ENCODE measurements at regions of chr14 and their contacts with region 1.

Region 1: GRCh38 chr14:76386915-76387782 is 11.2 kb downstream of the ESRRB start:
- DNase-seq: peak; percentile 86
- H3K4me3 ChIP-seq: no peak overlapping the region
- H3K27ac ChIP-seq: no peak overlapping the region
- H3K4me1 ChIP-seq: no peaks in the 10 kb centered on the region
- H3K27me3 ChIP-seq: peaks cover 30% of the 10 kb centered on the region
- CTCF ChIP-seq: peak; percentile 97

Region 2: DNA sequence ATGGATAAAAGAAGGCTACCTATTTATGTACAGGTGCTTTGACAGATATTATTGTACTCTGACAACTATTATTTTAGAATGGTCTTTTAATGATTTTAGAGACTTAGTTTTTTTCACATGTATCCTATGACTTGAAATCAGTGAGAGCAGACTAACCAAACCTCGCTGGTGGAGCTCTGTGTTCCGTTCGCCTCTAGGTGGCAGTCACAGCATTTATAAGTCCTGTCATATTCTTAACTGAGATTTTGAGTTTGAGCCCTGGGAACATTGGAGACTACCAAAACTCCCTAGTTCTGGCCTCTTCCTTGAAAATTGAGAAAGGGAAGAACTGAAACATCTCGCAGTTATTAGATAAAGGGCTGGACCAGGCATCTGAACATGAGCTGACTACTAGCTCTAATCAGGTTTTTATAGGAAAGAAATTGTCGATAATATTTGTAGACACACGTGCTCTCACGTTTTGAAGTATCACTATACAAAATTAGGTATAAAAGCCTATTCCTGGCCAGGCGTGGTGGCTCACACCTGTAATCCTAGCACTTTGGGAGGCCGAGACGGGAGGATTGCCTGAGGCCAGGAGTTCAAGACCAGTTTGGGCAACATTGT is 677.8 kb before region 1 on chr14:
- CTCF ChIA-PET with region 1: no interaction called
- POLR2A ChIA-PET with region 1: no interaction called
- intact Hi-C with region 1: loop called (anchors 2 kb)
- DNase-seq: peak; percentile 80
- H3K4me3 ChIP-seq: no peak overlapping the region
- H3K27ac ChIP-seq: no peak overlapping the region
- H3K4me1 ChIP-seq: peaks cover 12% of the 10 kb centered on the region
- H3K27me3 ChIP-seq: no peaks in the 10 kb centered on the region
- CTCF ChIP-seq: peak; percentile 91

Region 3: DNA sequence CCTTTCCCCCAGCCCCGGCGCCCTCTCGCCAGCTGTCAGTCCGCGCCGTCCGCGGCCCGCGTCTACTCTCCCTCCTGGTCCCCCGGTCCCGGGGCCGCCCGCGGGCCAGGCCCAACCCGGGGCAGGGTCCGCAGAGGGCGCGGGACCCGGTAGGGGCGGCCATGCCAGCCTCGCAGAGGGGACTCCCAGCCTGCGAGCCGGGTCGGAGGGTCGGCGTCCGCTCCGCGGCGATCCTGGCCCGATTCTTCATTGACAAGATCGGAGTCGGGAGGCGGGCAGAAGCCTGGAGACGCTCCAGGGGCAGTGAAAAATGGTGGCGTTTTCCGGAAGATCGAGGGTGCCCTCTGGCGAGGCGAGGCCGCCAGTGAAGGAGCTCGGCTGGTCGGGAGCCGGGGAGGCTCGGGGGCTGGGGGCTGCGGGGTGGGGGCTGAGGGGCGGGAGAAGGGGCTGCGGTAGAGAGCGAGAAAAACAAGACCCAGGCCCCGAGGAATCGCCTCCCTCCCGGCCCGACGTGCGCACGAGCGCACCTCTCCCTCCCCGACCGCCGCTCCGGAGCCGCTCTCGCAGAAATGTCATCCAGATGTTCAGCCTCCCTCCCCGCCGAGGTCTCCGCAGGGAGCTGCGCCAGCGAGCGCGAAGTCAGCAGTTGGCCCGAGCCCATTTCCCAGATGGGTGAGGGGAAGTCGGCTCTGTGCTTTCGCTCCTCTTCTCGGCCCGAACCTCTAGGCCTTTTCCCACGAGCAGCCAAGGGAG is 404.7 kb before region 1 on chr14:
- CTCF ChIA-PET with region 1: no interaction called
- POLR2A ChIA-PET with region 1: no interaction called
- intact Hi-C with region 1: loop called (anchors 5 kb)
- DNase-seq: peak; percentile 89
- H3K4me3 ChIP-seq: peak overlapping the region; percentile 95
- H3K27ac ChIP-seq: peak overlapping the region; percentile 92
- H3K4me1 ChIP-seq: peaks cover 9% of the 10 kb centered on the region
- H3K27me3 ChIP-seq: no peaks in the 10 kb centered on the region
- CTCF ChIP-seq: peak; percentile 60

Region 4: DNA sequence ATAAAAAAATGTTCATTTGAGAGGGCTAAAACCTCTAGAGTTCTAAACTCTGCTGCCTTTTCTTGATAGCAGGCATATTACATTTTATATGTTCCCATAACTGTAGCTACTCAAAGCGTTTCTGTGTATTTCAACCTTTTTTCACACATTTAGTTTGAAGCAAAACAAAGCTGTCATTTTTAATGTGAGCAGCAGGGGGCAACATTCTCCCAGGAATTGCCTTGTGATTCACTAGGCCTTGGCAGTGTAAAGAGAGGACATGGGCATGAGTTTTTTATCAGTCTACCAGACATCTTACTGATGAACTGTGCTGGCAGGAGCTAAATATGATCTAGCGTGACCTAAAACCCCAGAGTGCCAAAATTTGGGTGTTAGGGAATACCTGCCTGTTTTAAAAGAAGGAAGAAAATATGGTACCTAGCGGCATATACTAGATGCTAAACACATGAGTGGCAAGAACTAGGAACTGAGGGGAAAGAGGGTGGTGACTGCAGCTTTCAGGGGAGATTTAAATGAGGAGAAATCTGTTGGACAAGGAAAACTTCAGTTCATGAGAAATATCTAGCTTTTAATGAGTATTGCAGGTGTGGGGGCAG is 336.3 kb before region 1 on chr14:
- CTCF ChIA-PET with region 1: interaction called, 7 read pairs
- POLR2A ChIA-PET with region 1: interaction called, 4 read pairs
- intact Hi-C with region 1: loop called (anchors 1 kb)
- DNase-seq: peak; percentile 76
- H3K4me3 ChIP-seq: no peak overlapping the region
- H3K27ac ChIP-seq: no peak overlapping the region
- H3K4me1 ChIP-seq: no peaks in the 10 kb centered on the region
- H3K27me3 ChIP-seq: no peaks in the 10 kb centered on the region
- CTCF ChIP-seq: peak; percentile 82

Region 5: GRCh38 chr14:76320486-76320885 is 66.7 kb before region 1 on chr14:
- CTCF ChIA-PET with region 1: no interaction called
- POLR2A ChIA-PET with region 1: no interaction called
- intact Hi-C with region 1: no loop called
- DNase-seq: no peak
- H3K4me3 ChIP-seq: no peak overlapping the region
- H3K27ac ChIP-seq: no peak overlapping the region
- H3K4me1 ChIP-seq: no peaks in the 10 kb centered on the region
- H3K27me3 ChIP-seq: peaks cover 96% of the 10 kb centered on the region
- CTCF ChIP-seq: no peak

Region 6: GRCh38 chr14:76647697-76648298 is 260.6 kb after region 1 on chr14:
- CTCF ChIA-PET with region 1: no interaction called
- POLR2A ChIA-PET with region 1: no interaction called
- intact Hi-C with region 1: loop called (anchors 2 kb)
- DNase-seq: peak; percentile 72
- H3K4me3 ChIP-seq: no peak overlapping the region
- H3K27ac ChIP-seq: no peak overlapping the region
- H3K4me1 ChIP-seq: peaks cover 12% of the 10 kb centered on the region
- H3K27me3 ChIP-seq: no peaks in the 10 kb centered on the region
- CTCF ChIP-seq: peak; percentile 89

Region 7: DNA sequence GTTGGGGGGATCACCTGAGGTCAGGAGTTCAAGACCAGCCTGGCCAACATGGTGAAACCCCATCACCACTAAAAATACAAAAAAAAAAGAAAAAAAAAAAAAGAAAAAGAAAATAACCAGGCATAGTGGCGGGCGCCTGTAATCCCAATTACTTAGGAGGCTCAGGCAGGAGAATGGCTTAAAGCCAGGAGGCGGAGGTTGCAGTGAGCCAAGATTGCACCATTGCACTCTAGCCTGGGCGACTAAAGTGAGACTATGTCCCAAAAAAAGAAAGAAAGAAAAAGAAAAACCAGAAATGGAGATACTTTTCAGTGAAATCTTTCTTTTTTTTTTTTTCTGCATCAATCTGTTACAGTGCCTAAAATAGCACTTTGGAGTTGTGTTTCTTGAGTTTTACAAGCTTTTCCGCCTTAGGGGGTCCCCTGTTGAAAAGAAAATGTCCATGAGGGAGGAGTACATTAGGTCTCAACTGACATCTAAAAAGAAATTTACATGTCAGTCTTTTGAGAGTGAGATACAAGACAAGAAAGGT is 291.2 kb after region 1 on chr14:
- CTCF ChIA-PET with region 1: no interaction called
- POLR2A ChIA-PET with region 1: no interaction called
- intact Hi-C with region 1: no loop called
- DNase-seq: no peak
- H3K4me3 ChIP-seq: no peak overlapping the region
- H3K27ac ChIP-seq: no peak overlapping the region
- H3K4me1 ChIP-seq: no peaks in the 10 kb centered on the region
- H3K27me3 ChIP-seq: no peaks in the 10 kb centered on the region
- CTCF ChIP-seq: no peak

Region 8: DNA sequence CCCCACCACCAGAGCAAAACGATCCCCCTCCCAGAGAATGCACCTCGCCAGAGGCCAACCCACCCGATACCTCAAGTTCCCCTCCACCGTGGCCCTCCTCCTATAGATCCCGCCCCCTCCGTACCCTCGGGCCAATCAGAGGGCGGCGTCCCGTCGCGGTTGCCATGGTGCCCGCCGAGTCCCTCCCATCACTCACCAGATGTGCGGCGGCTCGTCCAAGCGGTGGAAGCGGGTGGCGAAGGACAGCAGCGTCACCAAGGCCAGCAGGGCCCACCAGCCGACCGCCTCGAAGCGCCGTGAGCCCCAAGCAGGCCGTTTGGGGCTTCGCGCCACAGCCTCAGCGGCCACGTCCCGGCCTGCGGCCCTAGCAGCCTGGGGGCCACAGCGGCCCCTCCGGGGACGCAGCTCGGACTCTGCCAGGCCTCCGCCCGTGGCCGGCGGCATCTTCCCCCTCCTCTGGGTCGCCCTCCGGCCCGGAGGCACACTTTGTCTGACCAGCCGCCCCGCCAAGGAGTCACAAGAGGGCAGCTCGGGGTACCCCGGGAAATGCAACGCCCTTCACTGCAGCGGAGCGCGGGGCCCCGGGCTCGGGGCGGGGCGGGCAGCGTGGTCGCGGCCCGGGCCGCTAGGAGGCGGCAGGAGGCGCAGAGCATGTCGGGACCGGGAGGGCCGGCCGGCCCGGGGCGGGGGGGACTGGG is 933.2 kb after region 1 on chr14 and contains the start of gene POMT2:
- CTCF ChIA-PET with region 1: no interaction called
- POLR2A ChIA-PET with region 1: no interaction called
- intact Hi-C with region 1: no loop called
- DNase-seq: peak; percentile 95
- H3K4me3 ChIP-seq: peak within 1 kb of the TSS; percentile 82
- H3K27ac ChIP-seq: peak within 1 kb of the TSS; percentile 97
- H3K4me1 ChIP-seq: peaks cover 21% of the 10 kb centered on the region
- H3K27me3 ChIP-seq: no peaks in the 10 kb centered on the region
- CTCF ChIP-seq: peak; percentile 36; the same call in 1 of the 2 replicates
- total RNA-seq, gene POMT2: 49.5 and 55.6 TPM in 2 replicates

Region 9: GRCh38 chr14:77763978-77764377 is 1376.8 kb after region 1 on chr14:
- CTCF ChIA-PET with region 1: interaction called, 10 read pairs
- POLR2A ChIA-PET with region 1: no interaction called
- intact Hi-C with region 1: no loop called
- DNase-seq: no peak
- H3K4me3 ChIP-seq: no peak overlapping the region
- H3K27ac ChIP-seq: no peak overlapping the region
- H3K4me1 ChIP-seq: peaks cover 11% of the 10 kb centered on the region
- H3K27me3 ChIP-seq: no peaks in the 10 kb centered on the region
- CTCF ChIP-seq: no peak